Vagina (tissue), 2 donors: ENCODE measurements at regions of chr11 and their contacts with region 1.

Region 1: GRCh38 chr11:65506770-65507505 is 8.1 kb downstream of the MALAT1 start:
- DNase-seq: no peak
- H3K4me3 ChIP-seq: peak overlapping the region; percentile 77 to 83
- H3K27ac ChIP-seq: peak overlapping the region; percentile 100
- H3K4me1 ChIP-seq: peaks cover 49% of the 10 kb centered on the region
- H3K27me3 ChIP-seq: no peaks in the 10 kb centered on the region
- CTCF ChIP-seq: peak in 1 of 3 experiments; percentile 8
- POLR2A ChIP-seq: no peak

Region 2: GRCh38 chr11:65382033-65382807 is 124.7 kb before region 1 on chr11 and contains the start of gene SLC25A45:
- intact Hi-C with region 1: loop called (anchors 1 kb)
- DNase-seq: peak in 1 of 2 donors; percentile 99
- H3K4me3 ChIP-seq: peak within 1 kb of the TSS; percentile 42 to 51
- H3K27ac ChIP-seq: peak within 1 kb of the TSS; percentile 98
- H3K4me1 ChIP-seq: peaks cover 67% of the 10 kb centered on the region
- H3K27me3 ChIP-seq: no peaks in the 10 kb centered on the region
- CTCF ChIP-seq: peak; percentile 92 to 95 (median 92)
- POLR2A ChIP-seq: peak in 1 of 2 donors; percentile 29
- total RNA-seq, gene SLC25A45: 2.2 TPM

Region 3: DNA sequence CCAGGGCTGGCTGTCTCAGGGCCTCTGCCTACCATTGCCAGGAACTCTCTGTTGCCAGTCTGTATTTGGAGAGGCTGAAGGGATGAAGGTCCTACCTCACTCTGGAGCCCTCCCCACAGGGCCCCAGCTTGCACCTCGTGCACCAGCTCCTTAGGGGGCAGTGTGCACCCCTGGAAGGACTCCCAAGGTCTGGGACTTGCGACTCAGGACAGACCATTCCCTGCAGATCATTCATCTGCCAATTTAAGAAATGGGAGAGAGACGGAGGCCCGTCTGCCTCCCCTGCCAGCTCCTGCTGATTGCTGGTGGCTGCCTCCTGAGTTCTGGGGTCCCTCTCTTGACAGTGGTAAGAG is 35.6 kb before region 1 on chr11:
- intact Hi-C with region 1: loop called (anchors 5 kb)
- DNase-seq: no peak
- H3K4me3 ChIP-seq: peak overlapping the region; percentile 23 to 36
- H3K27ac ChIP-seq: peak overlapping the region; percentile 100
- H3K4me1 ChIP-seq: peaks cover 38% of the 10 kb centered on the region
- H3K27me3 ChIP-seq: no peaks in the 10 kb centered on the region
- CTCF ChIP-seq: peak; percentile 6 to 39 (median 35)
- POLR2A ChIP-seq: no peak